Cardiac septum (tissue), 1 donor: ENCODE measurements at regions of chr1 and their contacts with region 1.

Region 1: DNA sequence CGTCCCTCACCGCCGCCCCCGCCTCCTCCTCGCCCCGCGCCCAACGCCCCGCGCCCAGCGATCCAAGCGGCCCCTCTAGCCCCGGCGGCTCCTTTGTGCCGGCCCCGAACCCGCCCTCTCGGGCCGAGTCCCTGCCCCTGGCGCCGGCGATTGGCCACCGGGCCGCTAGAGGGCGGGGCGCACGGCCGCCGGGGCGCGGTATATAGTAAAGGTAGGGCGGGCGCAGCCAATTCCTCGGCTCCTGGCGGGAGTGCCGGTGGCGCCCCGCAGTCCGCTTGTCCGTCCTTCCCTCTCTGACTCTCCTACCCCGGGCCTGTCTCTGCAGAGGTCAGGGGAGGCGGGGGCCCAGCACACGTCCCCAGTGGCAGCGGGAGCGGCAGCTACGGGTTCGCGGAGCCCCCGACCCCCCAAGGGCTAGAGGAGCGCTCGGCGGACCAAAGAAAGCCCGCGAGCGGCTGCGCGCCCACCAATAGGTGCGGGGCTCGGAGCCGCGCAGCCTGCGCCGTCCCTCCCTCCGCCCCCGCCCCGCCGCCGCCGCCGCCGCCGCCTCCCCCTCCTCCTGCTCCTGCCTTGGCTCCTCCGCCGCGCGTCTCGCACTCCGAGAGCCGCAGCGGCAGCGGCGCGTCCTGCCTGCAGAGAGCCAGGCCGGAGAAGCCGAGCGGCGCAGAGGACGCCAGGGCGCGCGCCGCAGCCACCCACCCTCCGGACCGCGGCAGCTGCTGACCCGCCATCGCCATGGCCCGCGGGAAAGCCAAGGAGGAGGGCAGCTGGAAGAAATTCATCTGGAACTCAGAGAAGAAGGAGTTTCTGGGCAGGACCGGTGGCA is at the start of gene ATP1B1:
- DNase-seq: peak; percentile 92
- total RNA-seq, gene ATP1B1: 256 TPM

Region 2: DNA sequence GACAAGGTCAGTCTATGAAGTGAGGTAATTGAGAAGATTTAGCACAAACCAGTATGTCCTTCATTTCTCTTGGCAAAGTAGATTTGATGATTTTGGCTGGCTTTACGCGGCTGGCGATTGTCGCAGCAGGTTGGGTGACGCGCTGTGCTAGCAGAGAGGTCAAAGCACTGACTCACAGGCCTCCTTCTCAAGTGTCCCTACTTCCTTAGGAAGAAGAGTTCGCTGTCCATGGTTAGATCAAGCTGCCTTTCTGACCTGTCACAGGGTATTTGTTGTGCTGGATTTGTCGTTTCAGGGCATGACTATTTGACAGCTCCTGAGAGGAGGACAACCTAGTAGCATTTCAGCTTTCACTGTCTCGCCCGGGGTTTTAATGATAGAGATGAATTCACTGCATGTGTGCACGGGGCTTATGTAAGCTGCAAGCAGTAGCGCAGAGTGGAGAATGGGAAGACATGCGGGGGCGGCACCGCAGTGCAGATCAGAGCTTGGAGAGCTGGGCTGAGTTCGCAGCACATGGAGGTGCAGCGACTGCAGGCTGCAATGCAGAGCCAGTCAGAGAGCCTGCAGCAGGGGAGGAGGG is 497.1 kb before region 1 on chr1:
- intact Hi-C with region 1: loop called (anchors 5 kb)
- DNase-seq: peak; percentile 81

Region 3: GRCh38 chr1:168734946-168735345 is 371.4 kb before region 1 on chr1:
- intact Hi-C with region 1: loop called (anchors 5 kb)
- DNase-seq: no peak

Region 4: DNA sequence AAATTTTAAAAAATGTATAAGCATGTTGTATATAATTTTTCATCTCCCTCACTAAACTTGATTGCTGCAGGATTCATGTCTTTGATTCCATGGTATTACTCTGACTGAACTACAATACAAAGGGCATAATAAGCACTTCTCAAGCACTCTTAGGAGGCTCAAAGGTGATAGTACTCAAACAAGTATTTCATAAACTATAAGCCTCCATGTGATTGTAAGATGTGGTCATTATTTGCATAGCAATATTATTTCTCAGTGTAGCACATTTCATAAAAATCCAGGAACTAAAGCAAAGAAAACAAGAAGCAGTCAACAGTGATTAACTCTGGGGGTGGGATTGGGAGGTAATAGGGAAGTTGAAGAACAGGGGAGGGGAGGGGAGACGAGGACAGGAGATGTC is 271.1 kb before region 1 on chr1:
- intact Hi-C with region 1: loop called (anchors 5 kb)
- DNase-seq: no peak

Region 5: GRCh38 chr1:169180171-169180570 is 73.9 kb after region 1 on chr1:
- intact Hi-C with region 1: no loop called
- DNase-seq: no peak

Region 6: DNA sequence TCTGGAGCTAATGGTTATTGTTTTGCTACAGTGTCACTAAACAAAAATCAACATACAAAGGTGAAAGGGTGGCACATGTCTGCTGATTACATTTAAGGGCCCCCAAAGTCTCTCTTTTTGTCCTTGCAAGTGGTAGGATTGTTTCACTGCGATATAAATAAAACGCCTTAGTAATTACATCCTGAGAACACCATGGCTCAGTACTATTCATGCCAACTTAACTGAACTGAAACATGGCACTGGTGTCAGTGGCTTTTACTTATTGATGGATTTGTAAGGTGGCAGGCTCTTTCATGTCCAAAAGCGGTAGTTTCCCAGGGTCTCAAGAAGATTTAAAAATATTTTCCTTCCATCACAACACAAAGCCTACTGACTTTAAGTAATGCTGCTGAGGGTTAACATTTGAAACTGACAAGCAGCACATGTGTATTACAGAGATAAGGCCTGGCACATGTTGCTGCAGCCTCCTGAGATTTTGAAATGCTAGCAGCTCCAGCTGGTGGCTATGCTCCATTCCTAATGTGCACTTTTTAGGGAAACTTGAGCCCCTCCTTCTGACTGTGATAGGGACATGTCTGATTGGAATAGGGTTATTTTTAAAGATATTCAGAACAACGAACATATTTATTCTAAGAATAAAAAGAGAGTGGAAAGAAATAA is 87.0 kb after region 1 on chr1:
- intact Hi-C with region 1: loop called (anchors 5 kb)
- DNase-seq: no peak

Region 7: GRCh38 chr1:169511316-169512028 is 405.2 kb after region 1 on chr1:
- intact Hi-C with region 1: no loop called
- DNase-seq: no peak